Activated T-helper 1 cell treated with anti-CD3 and anti-CD28 coated beads, Interleukin-12 subunit alpha, Interleukin-12 subunit beta, Interleukin-2, Interleukin-4 antibody, amounts not matched to agents 30 ng/mL and 10 ng/mL and 1 ng/mL, durations not matched to agents 14 hours and 24 hours and 36 hours (primary cell): ENCODE measurements at regions of chr1 and their contacts with region 1.

Region 1: DNA sequence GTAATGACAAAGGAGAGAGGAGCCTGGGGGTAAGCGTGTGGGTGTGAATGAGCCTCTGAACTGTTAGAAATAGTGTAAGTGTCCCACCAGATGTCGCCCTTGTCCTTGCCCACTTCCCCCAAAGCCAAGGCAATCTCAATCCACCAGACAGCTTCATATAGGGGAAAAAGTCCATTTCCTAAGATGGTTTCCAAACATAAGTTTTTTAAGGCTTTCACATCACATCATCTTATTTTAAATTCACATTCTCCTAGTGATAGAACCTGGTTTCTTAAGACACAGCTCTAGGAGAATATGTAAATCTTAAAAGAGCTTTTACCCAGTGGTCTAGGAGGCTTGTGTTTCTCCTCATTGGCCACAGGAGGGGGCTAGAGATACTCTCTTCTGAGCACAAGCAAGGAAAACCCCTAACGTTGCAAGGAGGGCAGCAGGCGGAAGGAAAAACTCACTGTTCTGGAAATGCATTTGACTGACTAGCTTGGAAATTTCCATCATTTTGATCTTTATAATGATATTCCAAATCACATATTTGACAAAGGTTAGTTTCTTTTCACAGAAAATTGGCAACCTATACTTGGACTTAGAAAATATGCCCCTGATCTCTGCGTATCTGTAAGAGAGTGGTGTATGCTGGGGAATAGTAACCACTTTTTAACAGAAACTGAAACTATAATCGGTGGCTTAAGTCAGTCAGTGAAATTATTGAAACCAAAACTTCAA is 51.9 kb upstream of the LPAR3 start:
- DNase-seq: peak; percentile 77
- H3K4me3 Mint-ChIP-seq: peak overlapping the region; percentile 81
- H3K27ac Mint-ChIP-seq: peak overlapping the region; percentile 91
- H3K4me1 Mint-ChIP-seq: peaks cover 39% of the 10 kb centered on the region
- H3K27me3 Mint-ChIP-seq: no peaks in the 10 kb centered on the region

Region 2: GRCh38 chr1:84690397-84691121 is 254.4 kb before region 1 on chr1 and contains the start of gene SSX2IP:
- intact Hi-C with region 1: loop called (anchors 1 kb)
- DNase-seq: peak; percentile 98
- H3K4me3 Mint-ChIP-seq: peak within 1 kb of the TSS; percentile 94
- H3K27ac Mint-ChIP-seq: peak within 1 kb of the TSS; percentile 95
- H3K4me1 Mint-ChIP-seq: peaks cover 59% of the 10 kb centered on the region
- H3K27me3 Mint-ChIP-seq: no peaks in the 10 kb centered on the region
- total RNA-seq, gene SSX2IP: 11.1 and 15.0 TPM in 2 replicates

Region 3: DNA sequence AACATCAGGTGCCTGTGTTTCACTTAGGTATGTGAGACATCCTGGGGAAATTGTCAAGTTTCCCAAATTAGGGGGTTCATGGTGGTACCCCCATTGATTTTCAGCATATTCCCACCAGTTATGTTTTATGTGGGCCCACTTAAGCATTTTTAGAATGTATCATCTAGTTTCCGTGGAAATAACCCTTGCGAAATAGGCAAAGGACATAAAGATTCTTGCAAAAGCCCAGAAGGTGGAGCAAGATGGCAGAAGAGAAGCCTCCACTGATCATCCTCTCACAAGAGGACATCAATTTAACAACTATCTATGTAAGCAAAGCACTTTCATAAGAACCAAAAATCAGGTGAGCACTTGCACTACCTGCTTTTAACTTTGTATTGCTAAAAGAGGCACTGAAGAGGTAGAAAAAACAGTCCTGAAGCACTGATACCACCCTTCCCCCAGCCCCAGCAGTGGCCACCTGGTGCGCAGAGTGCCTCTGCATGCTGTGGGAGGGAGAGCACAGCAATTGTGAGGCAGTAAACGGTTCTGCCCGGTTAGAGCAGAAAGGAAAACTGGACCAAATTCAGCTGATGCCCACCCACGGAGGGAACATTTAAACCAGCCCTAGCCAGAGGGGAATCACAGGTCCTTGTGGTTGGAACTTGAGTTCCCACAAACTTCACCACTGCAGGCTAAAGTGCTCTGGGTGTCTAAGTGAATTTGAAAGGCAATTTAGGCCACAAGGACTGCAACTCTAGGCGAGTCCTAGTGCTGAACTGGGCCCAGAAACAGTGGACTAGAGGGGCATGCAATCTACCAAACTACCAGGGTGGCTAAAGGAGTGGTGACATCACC is 28.8 kb after region 1 on chr1:
- intact Hi-C with region 1: loop called (anchors 1 kb)
- DNase-seq: peak; percentile 13
- H3K4me3 Mint-ChIP-seq: peak overlapping the region; percentile 32
- H3K27ac Mint-ChIP-seq: peak overlapping the region; percentile 70
- H3K4me1 Mint-ChIP-seq: peaks cover 82% of the 10 kb centered on the region
- H3K27me3 Mint-ChIP-seq: no peaks in the 10 kb centered on the region

Region 4: DNA sequence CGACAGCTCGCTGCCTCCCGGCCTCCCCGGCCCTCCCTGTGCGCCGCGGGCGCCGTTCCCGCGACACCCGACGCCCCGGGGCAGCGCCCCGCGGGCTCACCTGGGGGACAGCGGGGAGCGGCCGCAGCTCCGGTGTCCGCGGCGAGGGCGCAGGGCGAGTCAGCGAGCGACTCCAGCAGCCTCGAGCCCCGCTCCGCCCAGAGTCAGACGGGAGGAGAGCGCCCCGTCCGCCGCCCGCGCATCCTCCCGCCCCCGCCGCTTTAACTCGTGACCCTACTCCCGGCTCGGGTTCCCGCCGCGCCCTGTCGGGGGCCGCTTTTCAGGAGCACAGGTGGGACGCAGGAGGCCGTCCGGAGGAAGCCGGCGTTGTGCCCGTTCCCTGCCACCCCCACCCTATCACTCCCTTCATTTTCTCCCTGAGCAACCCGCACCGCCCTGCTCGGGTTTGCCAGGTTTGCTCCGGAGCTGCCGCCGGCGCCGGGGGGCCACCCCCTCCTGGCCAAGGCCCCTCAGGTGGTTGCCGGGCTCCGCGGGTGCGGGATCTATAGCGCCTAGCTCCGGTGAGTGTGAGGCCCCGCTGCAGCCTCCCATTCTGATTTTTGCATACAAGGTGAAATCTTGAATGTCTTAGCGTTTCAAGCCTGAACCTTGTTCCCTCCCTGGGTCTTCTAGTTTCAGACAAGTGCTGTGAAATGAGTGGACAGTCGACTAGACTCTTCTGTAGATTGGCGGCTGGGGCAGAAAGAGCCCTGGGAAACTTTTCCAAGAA is 103.6 kb after region 1 on chr1 and contains the start of gene MCOLN3:
- intact Hi-C with region 1: loop called (anchors 1 kb)
- DNase-seq: peak; percentile 28
- H3K4me3 Mint-ChIP-seq: peak within 1 kb of the TSS; percentile 83
- H3K27ac Mint-ChIP-seq: no peak within 1 kb of the TSS
- H3K4me1 Mint-ChIP-seq: peaks cover 37% of the 10 kb centered on the region
- H3K27me3 Mint-ChIP-seq: peaks cover 52% of the 10 kb centered on the region
- total RNA-seq, gene MCOLN3: 1.3 and 1.7 TPM in 2 replicates

Region 5: DNA sequence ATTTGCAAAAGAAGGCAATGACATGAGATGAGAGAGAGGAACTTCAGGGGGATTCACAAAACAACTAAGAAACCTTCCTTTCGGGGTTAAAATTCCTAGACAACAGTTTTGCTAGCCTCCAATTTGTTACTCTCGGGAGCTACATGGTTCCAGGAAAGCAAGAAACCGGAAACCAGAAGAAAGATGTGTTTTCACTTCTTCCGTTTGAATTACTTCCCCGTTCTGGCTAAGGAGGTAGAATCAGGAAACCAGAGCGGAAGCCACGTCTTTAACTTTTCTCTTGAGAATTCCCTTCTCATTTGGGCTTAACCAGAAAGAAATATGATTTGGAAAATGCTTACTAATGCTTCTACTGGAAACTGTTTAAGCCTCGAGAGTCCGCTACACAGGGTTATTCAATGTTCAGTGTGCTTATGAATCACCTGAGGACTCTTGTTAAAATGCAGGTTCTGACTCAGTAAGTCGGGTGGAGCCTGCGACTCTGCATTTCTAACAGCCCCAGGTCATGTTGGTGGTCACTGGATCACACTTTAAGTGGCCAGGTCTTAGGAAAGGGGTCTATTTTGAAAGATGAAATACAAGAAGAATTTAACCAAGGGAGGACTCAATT is 146.8 kb after region 1 on chr1:
- intact Hi-C with region 1: loop called (anchors 1 kb)
- DNase-seq: no peak
- H3K4me3 Mint-ChIP-seq: peak overlapping the region; percentile 69
- H3K27ac Mint-ChIP-seq: no peak overlapping the region
- H3K4me1 Mint-ChIP-seq: peaks cover 15% of the 10 kb centered on the region
- H3K27me3 Mint-ChIP-seq: peaks cover 22% of the 10 kb centered on the region

Region 6: GRCh38 chr1:85297855-85298629 is 353.1 kb after region 1 on chr1:
- intact Hi-C with region 1: loop called (anchors 1 kb)
- DNase-seq: peak; percentile 62
- H3K4me3 Mint-ChIP-seq: peak overlapping the region; percentile 1
- H3K27ac Mint-ChIP-seq: peak overlapping the region; percentile 80
- H3K4me1 Mint-ChIP-seq: peaks cover 34% of the 10 kb centered on the region
- H3K27me3 Mint-ChIP-seq: peaks cover 47% of the 10 kb centered on the region